Activated CD4-positive, alpha-beta memory T cell treated with anti-CD3 and anti-CD28 coated beads for 36 hours (primary cell): ENCODE measurements at regions of chr19 and their contacts with region 1.

Region 1: GRCh38 chr19:2269244-2269947 is 12.6 kb downstream of the PEAK3 start:
- DNase-seq: peak; percentile 99
- H3K4me3 Mint-ChIP-seq: peak overlapping the region; percentile 89
- H3K27ac Mint-ChIP-seq: peak overlapping the region; percentile 88
- H3K4me1 Mint-ChIP-seq: peaks cover 34% of the 10 kb centered on the region
- H3K27me3 Mint-ChIP-seq: no peaks in the 10 kb centered on the region

Region 2: GRCh38 chr19:2032296-2032941 is 237.0 kb before region 1 on chr19:
- CTCF ChIA-PET with region 1: no interaction called
- POLR2A ChIA-PET with region 1: no interaction called
- intact Hi-C with region 1: loop called (anchors 10 kb)
- DNase-seq: peak; percentile 78
- H3K4me3 Mint-ChIP-seq: peak overlapping the region; percentile 67
- H3K27ac Mint-ChIP-seq: peak overlapping the region; percentile 61
- H3K4me1 Mint-ChIP-seq: peaks cover 24% of the 10 kb centered on the region
- H3K27me3 Mint-ChIP-seq: no peaks in the 10 kb centered on the region

Region 3: GRCh38 chr19:2221918-2222317 is 47.5 kb before region 1 on chr19:
- CTCF ChIA-PET with region 1: no interaction called
- POLR2A ChIA-PET with region 1: no interaction called
- intact Hi-C with region 1: no loop called
- DNase-seq: no peak
- H3K4me3 Mint-ChIP-seq: no peak overlapping the region
- H3K27ac Mint-ChIP-seq: no peak overlapping the region
- H3K4me1 Mint-ChIP-seq: no peaks in the 10 kb centered on the region
- H3K27me3 Mint-ChIP-seq: no peaks in the 10 kb centered on the region

Region 4: DNA sequence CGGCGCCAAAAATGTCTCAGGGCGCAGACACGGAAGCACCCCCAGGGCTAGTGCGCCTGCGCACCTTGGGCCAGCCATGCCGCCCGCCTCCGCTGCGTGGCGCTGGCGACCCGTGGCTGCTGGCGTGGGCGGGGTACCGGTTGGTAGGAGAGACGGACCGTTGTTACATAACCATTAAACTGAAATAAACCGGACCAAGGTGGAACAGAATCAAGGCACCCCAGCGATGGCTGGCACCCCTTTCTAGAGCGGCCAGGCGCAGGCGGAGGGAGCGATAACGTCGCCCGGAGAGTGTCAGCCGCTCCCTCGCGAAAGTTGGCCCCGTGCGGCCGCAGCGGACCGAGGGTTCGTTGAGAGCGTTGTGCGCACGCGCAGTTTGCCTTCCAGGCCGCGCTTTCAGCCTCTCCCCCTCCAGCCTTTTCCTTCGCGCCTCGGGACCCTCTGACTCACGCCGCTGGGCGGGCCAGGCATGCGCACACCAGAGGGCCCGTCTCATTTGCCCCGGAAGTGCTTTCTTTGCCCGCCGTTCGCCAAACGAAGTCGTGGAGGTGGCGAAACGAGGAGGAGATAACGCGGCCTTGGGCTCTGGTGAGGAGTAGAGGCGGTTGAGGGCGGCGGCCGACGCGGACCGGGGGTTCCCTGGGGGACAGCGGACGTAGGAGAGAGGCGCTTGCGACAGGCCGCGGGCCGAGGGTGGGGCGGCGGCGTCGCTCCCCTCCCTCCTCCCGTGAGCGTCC is 32.9 kb before region 1 on chr19 and contains the starts of genes PLEKHJ1 and SF3A2:
- CTCF ChIA-PET with region 1: interaction called, 33 read pairs
- POLR2A ChIA-PET with region 1: interaction called, 10 read pairs
- intact Hi-C with region 1: loop called (anchors 1 kb)
- DNase-seq: peak; percentile 99
- H3K4me3 Mint-ChIP-seq: peak within 1 kb of the TSS; percentile 97
- H3K27ac Mint-ChIP-seq: peak within 1 kb of the TSS; percentile 95
- H3K4me1 Mint-ChIP-seq: peaks cover 59% of the 10 kb centered on the region
- H3K27me3 Mint-ChIP-seq: peaks cover 4% of the 10 kb centered on the region
- total RNA-seq, gene PLEKHJ1: 60.8 to 64.0 TPM
- total RNA-seq, gene SF3A2: 123 to 134 TPM

Region 5: DNA sequence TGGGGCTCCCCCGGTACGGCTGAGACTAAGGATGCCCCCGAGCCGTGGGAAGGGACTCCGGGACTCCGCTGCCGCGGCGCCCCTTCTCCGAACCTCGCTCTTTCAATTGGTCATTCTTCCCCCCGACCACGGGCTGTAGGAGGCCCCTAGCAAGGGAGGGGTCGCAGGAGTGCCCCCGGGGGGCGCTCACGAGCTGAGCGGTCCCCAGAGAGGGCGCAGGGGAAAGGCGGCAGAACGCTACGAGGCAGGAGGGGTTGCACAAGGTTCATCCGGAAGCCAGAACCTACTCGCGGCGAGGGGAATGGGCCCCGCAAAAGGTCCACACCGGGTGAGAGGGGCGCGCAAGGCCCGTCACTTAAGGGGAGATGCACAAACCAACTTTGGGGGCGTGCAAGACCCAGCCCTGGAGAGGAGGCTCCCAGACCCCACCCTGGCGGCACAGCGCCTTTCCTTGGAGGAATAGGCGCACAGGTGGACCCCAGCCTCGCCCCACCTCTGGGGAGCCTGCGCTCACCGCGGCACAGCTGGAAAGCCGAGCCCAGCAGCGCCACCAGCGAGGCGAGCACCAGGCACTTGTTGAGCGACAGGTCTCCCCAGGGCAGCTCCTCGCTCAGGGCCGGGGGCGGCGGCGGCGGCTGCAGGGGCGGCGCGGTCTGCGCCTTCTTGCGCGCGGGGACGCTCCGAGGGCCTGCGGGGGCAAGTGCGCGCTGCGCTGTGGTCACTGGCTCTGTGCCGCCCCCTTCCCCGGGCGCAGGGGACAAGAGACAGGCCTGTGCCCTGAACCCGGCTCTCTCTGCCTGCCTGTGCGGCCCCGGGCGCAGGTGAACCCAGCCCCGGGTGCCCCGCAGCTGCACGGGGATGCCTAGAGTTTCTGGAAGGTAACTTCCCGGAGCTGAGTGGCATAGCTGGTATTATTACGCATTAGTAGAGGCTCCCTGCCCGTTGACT is 16.0 kb before region 1 on chr19:
- CTCF ChIA-PET with region 1: interaction called, 8 read pairs
- POLR2A ChIA-PET with region 1: interaction called, 8 read pairs
- intact Hi-C with region 1: loop called (anchors 2 kb)
- DNase-seq: peak; percentile 58
- H3K4me3 Mint-ChIP-seq: peak overlapping the region; percentile 6
- H3K27ac Mint-ChIP-seq: no peak overlapping the region
- H3K4me1 Mint-ChIP-seq: peaks cover 24% of the 10 kb centered on the region
- H3K27me3 Mint-ChIP-seq: peaks cover 15% of the 10 kb centered on the region

Region 6: GRCh38 chr19:2289714-2290435 is 20.5 kb after region 1 on chr19:
- CTCF ChIA-PET with region 1: interaction called, 10 read pairs
- POLR2A ChIA-PET with region 1: no interaction called
- intact Hi-C with region 1: no loop called
- DNase-seq: peak; percentile 65
- H3K4me3 Mint-ChIP-seq: peak overlapping the region; percentile 70
- H3K27ac Mint-ChIP-seq: no peak overlapping the region
- H3K4me1 Mint-ChIP-seq: peaks cover 21% of the 10 kb centered on the region
- H3K27me3 Mint-ChIP-seq: peaks cover 8% of the 10 kb centered on the region

Region 7: DNA sequence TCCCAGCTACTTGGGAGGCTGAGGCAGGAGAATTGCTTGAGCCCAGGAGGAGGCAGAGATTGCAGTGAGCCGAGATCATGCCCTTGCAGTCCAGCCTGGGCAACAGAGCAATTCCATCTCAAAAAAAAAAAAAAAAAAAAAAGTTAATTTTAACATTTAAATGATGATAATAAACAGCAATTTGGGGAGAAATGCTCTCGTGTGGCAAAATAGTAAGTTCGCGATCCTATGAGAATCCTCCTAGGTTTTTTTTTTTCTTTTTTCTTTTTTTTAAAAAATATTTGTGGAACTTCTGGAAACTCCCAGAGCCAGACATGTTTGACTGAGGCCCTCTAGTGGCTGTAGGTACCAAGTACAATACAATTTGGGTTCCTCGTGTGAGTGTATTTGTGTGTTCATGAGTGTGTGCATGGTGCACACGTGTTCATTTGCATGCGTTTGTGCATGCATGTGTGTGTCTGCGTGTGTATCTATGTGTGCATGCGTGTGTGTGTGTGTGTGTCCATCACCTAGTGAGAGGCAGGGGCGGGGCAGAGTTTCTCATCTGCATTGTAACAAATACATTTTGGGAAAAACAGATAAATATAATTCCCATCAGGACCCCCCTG is 121.8 kb after region 1 on chr19:
- CTCF ChIA-PET with region 1: interaction called, 3 read pairs
- POLR2A ChIA-PET with region 1: no interaction called
- intact Hi-C with region 1: loop called (anchors 5 kb)
- DNase-seq: peak; percentile 45
- H3K4me3 Mint-ChIP-seq: no peak overlapping the region
- H3K27ac Mint-ChIP-seq: no peak overlapping the region
- H3K4me1 Mint-ChIP-seq: peaks cover 10% of the 10 kb centered on the region
- H3K27me3 Mint-ChIP-seq: no peaks in the 10 kb centered on the region